ENCODE measurements at regions of chr4 and their contacts with region 1.

Region 1: GRCh38 chr4:105471566-105472176 is 2.2 kb downstream of the PPA2 start:
- DNase-seq: no peak
- ATAC-seq: peak; percentile 35
- H3K4me3 Mint-ChIP-seq: peak overlapping the region; percentile 59
- H3K27ac Mint-ChIP-seq: peak overlapping the region; percentile 13
- H3K4me1 Mint-ChIP-seq: peaks cover 37% of the 10 kb centered on the region
- H3K27me3 Mint-ChIP-seq: no peaks in the 10 kb centered on the region
- CTCF ChIP-seq: peak; percentile 38

Region 2: DNA sequence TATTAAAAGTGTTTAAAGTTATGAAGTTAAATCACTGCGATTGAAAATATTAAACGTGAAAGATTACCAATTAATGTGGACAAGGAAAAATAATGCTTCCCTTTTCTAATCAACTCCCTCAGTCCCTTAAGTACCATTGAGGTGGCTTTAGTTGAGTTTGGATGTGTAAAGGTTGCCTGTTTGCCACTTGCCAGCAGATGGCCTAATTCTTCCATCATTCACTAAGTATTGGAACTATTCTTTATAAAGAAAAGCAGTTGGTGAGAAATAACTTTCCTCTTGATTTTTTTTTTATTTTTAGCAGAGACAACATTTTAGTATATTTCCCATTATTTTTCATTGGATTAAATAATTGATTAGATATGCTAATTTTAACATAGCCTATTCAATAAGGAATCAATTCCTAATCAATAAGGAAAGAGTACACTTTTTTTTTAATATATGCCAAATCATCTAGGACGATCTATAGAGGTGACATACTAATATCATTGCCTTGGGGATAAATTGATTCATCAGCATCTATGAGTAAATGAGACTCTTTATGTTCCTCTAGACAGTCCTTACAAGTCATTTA is 1455.9 kb before region 1 on chr4:
- CTCF ChIA-PET with region 1: no interaction called
- POLR2A ChIA-PET with region 1: no interaction called
- intact Hi-C with region 1: loop called (anchors 5 kb)
- DNase-seq: no peak
- ATAC-seq: no peak
- H3K4me3 Mint-ChIP-seq: no peak overlapping the region
- H3K27ac Mint-ChIP-seq: no peak overlapping the region
- H3K4me1 Mint-ChIP-seq: no peaks in the 10 kb centered on the region
- H3K27me3 Mint-ChIP-seq: no peaks in the 10 kb centered on the region
- CTCF ChIP-seq: no peak

Region 3: GRCh38 chr4:104860238-104861123 is 611.2 kb before region 1 on chr4:
- CTCF ChIA-PET with region 1: no interaction called
- POLR2A ChIA-PET with region 1: no interaction called
- intact Hi-C with region 1: loop called (anchors 5 kb)
- DNase-seq: no peak
- ATAC-seq: peak; percentile 70
- H3K4me3 Mint-ChIP-seq: no peak overlapping the region
- H3K27ac Mint-ChIP-seq: no peak overlapping the region
- H3K4me1 Mint-ChIP-seq: no peaks in the 10 kb centered on the region
- H3K27me3 Mint-ChIP-seq: peaks cover 2% of the 10 kb centered on the region
- CTCF ChIP-seq: peak; percentile 96

Region 4: DNA sequence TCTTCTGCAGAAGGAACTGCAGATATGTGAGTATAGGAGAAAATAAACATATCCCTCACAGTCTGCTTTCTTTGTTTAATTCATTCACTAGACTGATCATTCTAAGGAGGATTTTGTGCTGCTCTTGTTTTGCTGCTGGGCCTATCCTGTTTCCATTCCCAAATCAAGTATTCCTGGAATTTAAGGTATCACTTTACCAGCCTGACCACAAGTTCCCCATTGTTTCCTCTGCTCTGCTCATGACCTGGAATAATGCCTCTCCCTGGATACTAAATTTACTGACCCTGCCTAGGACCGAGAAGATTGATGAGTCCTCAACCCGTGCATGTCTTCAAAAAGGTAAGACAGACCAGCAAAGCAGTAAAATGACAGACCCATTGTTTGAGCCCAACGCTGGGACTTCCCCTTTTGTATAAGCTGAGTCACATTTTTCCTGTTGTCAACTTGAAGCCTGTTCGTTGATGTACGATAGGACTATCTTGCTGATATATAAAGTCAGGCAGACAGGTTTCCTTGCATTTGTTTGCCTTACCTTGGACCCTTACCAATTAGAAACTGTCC is 410.5 kb before region 1 on chr4:
- CTCF ChIA-PET with region 1: interaction called, 3 read pairs
- POLR2A ChIA-PET with region 1: interaction called, 5 read pairs
- intact Hi-C with region 1: loop called (anchors 1 kb)
- DNase-seq: no peak
- ATAC-seq: peak; percentile 43
- H3K4me3 Mint-ChIP-seq: peak overlapping the region; percentile 74
- H3K27ac Mint-ChIP-seq: peak overlapping the region; percentile 87
- H3K4me1 Mint-ChIP-seq: peaks cover 46% of the 10 kb centered on the region
- H3K27me3 Mint-ChIP-seq: no peaks in the 10 kb centered on the region
- CTCF ChIP-seq: no peak

Region 5: GRCh38 chr4:105191621-105192210 is 280.0 kb before region 1 on chr4:
- CTCF ChIA-PET with region 1: interaction called, 3 read pairs
- POLR2A ChIA-PET with region 1: interaction called, 4 read pairs
- intact Hi-C with region 1: loop called (anchors 5 kb)
- DNase-seq: no peak
- ATAC-seq: peak; percentile 73
- H3K4me3 Mint-ChIP-seq: peak overlapping the region; percentile 25
- H3K27ac Mint-ChIP-seq: peak overlapping the region; percentile 77
- H3K4me1 Mint-ChIP-seq: peaks cover 79% of the 10 kb centered on the region
- H3K27me3 Mint-ChIP-seq: no peaks in the 10 kb centered on the region
- CTCF ChIP-seq: no peak

Region 6: DNA sequence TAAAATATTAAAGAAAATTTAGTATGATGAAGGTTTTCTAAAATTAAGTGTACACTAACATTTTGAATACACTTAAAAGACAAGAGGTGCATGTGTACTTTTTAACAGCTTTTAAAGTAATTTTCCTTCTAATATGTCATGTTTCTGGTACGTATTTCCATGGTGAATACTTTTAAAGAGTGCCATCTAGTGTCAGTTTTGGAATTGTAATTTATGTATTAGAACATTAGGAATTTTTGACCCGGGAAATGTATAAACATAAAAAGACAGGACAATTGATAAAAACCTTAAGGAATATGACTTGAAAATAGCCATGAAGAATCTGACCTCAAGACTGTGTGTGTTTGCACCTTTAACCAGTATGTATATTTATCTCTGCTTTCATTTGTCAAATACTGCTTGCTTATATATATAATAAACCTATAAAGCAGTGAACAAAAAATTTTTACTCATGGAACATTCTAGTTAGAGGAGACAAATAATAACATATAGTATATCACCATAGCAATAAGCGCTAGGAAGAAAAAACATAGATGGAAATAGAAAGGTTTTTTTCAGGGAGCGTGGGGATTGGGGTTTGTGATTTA is 244.1 kb after region 1 on chr4:
- CTCF ChIA-PET with region 1: interaction called, 6 read pairs
- POLR2A ChIA-PET with region 1: interaction called, 5 read pairs
- intact Hi-C with region 1: loop called (anchors 1 kb)
- DNase-seq: no peak
- ATAC-seq: no peak
- H3K4me3 Mint-ChIP-seq: no peak overlapping the region
- H3K27ac Mint-ChIP-seq: no peak overlapping the region
- H3K4me1 Mint-ChIP-seq: peaks cover 15% of the 10 kb centered on the region
- H3K27me3 Mint-ChIP-seq: no peaks in the 10 kb centered on the region
- CTCF ChIP-seq: peak; percentile 29

Region 7: DNA sequence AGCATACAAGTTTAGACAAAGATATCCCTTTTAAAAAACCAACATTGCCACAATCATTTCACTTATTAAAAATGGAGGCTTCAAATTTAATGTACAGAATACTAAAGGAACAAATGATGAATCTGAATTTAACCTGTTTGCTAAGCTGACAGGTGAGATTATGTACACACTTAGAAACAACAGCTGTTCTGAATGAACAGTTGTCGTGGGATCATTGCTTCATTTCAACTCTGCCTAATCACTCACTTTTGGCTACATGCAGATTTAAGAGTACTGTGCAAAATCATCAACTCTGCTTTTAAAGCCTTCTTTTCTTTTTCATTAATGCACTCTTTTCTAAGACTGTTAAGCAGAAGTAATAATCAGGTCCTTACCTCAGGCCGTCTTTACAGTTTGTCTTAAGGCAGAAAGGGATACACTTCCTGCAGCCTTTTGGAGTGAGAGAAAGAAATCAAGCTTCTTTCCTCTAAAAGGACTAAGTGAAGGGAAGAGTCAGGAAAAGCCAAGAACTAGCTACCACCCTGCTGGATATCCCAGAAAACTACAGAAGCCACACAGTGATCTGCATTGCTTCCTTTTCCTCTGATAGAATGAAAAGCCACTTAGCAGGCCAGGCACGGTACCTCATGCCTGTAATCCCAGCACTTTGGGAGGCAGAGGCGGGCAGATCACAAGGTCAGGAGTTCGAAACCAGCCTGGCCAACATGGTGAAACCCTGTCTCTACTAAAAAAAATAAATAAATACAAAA is 368.9 kb after region 1 on chr4:
- CTCF ChIA-PET with region 1: no interaction called
- POLR2A ChIA-PET with region 1: no interaction called
- intact Hi-C with region 1: no loop called
- DNase-seq: no peak
- ATAC-seq: no peak
- H3K4me3 Mint-ChIP-seq: no peak overlapping the region
- H3K27ac Mint-ChIP-seq: no peak overlapping the region
- H3K4me1 Mint-ChIP-seq: no peaks in the 10 kb centered on the region
- H3K27me3 Mint-ChIP-seq: no peaks in the 10 kb centered on the region
- CTCF ChIP-seq: no peak

Measured in activated B cell treated with CpG ODN at 0.5 μM for 24 hours (primary cell).